ENCODE measurements at regions of chr2 and their contacts with region 1.

Region 1: DNA sequence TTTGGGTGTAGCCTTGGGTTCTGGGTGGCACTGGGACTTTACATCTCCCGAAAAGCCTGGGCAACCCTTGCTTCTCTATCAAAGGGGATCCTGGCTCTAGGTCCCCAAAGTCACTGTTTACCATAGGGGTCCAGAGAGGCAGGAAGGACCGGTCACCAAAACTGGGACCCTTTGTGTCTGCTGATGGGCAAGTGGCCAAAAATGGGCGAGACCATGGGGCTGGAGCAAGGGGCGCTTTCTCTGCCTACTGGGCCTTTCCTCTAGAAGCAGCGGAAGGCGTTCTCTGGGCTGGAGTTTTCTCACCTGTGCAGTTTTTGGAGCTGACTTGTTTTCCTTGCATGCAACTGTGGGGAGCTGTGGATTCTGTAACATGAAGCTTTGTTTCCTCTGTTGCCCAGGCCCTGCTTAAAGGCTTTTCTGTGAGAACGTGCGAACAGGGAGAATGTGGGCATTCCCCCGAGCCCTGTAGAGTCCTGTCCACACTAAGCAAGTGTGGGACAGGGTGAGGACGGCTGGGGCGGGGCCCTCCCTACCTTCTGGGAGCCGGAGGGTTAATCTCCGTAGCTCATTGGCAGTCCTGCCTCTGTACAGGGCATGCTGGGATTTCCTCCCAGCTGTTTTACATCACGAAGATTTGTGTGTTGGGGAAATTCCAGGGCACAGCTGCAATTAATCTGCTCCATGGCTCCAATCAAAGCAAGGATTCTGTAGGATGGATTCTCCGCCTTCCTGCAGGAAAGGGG is 50.2 kb downstream of the TGOLN2 start:
- DNase-seq: no peak

Region 2: DNA sequence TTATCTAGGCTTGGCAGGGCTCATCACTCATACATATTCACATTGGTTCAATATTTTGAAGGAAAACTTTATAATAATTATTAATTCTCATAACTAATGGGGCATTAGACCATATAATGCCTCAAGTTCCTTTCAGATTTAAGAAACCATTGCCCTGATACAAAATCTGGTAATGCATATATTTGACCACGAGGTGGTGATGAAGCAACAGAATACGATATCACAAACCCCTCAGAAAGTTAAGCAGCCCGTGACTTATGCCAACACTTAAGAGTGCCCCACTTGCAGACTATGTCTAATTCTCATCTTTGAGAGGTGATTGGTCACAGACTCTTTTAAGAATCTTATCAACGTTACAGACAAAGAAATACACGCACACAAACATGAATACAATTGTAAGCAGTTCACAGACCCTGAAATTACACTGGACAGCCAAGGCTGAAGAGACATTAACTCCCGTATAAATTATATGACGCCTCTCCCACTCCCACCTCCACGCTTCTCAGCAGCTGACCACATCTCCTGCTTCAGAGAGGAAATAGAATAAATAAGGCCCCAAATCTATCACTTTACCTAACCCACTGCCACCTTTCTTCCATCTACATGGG is 781.9 kb before region 1 on chr2:
- in situ Hi-C with region 1: loop called (anchors 25 kb)
- DNase-seq: peak; percentile 80

Region 3: DNA sequence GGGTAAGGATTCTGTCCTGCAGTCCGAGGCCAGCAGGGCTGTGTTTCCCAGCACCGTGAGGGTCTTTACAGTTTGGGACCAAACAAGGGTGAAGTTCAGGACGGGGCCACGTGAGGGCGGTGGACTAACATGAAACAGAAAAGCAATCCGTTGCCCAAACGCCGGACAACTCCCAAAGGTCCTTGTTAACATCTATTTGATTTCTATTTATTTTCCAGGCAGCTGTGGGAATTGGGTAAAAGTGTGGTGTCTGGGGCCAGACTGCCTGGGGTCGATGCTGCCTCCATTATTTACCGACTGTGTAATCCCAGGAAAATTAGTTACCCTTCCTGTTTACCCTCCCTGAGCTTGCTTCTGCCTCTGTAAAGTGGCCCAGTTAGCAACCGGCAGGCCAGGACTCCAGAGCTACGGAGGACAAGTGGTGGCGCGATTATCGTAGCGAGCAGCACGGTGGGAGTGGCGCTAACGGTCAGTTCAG is 210.7 kb before region 1 on chr2:
- in situ Hi-C with region 1: loop called (anchors 25 kb)
- DNase-seq: peak; percentile 87

Region 4: GRCh38 chr2:85433511-85434089 is 156.0 kb after region 1 on chr2:
- in situ Hi-C with region 1: no loop called
- DNase-seq: no peak

Region 5: GRCh38 chr2:85988175-85988913 is 710.8 kb after region 1 on chr2:
- in situ Hi-C with region 1: no loop called
- DNase-seq: no peak

Measured in KBM-7 (cell line).